BJ (cell line): ENCODE measurements at regions of chr4 and their contacts with region 1.

Region 1: GRCh38 chr4:68271851-68272756 is 26.6 kb upstream of the TMPRSS11B start:
- DNase-seq: peak; percentile 28
- H3K4me3 ChIP-seq: peak overlapping the region; percentile 33
- H3K27me3 ChIP-seq: no peaks in the 10 kb centered on the region
- CTCF ChIP-seq: peak; percentile 67

Region 2: DNA sequence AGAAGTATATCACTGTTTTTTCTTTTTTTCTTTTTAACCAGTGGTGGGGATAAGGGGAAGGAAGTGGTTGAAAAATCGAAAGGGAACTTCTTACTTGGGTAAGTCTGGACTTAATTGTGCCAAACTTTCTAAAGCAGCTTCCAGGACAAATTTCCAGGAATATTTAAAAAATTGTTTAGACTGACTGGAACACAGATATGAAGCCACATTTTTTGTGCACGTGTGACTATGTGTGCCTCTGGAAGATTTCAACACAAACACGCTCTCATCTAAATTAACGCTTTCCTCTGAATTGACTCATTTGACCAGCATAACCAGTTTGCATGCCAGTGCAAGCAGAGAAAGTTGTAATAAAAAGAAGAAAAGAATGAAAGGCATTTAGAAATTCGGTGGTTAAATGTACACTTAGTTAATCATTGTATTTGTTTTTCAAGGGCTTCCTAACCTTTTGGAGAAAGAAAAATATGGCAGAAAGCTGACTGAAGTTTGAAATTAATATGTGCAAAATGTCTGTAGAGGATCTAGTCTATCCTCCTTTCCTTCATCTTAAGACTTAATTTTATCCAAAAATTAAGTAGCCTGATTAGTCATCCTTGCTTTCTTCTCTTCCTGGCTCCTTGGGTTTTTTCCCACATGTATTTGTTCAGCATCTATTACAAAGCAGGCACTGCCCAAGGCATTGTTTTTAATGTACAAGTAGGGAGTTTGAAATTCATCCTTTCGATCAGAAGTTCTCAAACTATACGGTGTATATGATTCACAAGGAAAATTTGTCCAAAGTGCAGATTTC is 96.8 kb after region 1 on chr4:
- CTCF ChIA-PET with region 1: interaction called, 66 read pairs
- POLR2A ChIA-PET with region 1: no interaction called
- DNase-seq: peak; percentile 90
- H3K4me3 ChIP-seq: no peak overlapping the region
- H3K27me3 ChIP-seq: no peaks in the 10 kb centered on the region
- CTCF ChIP-seq: no peak

Region 3: GRCh38 chr4:68375667-68376559 is 103.8 kb after region 1 on chr4:
- CTCF ChIA-PET with region 1: interaction called, 66 read pairs
- POLR2A ChIA-PET with region 1: no interaction called
- DNase-seq: peak; percentile 9
- H3K4me3 ChIP-seq: 0 out of 2 replicates have a peak overlapping the region, but pooled peaks have one; percentile 0
- H3K27me3 ChIP-seq: no peaks in the 10 kb centered on the region
- CTCF ChIP-seq: peak; percentile 95

Region 4: GRCh38 chr4:68951078-68951805 is 679.1 kb after region 1 on chr4 and contains the start of gene UGT2A3:
- CTCF ChIA-PET with region 1: no interaction called
- POLR2A ChIA-PET with region 1: no interaction called
- DNase-seq: no peak
- H3K4me3 ChIP-seq: no peak within 1 kb of the TSS
- H3K27me3 ChIP-seq: no peaks in the 10 kb centered on the region
- CTCF ChIP-seq: no peak
- polyA plus RNA-seq, gene UGT2A3: not detected in 2 replicates